AG04449 (cell line): ENCODE measurements at regions of chrX and their contacts with region 1.

Region 1: DNA sequence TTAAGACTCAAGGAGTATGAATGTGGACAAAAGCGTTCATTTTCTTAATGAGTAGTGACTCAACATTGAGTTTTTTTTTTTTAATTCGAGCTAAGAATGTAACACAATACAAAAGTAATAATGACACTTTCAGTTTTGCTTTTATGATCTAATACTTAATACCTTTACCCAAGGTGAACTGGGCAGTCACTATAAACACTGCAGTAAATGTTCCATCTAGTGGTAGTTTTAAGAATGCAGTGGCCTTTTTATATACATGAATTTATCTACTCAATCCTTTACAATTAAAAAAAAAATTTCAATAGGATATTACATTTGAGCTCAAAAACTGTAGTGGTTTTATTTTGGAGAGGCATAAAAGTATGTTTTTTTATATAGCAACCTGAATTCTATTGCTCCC is 33.9 kb downstream of the PDK3 start:
- DNase-seq: no peak
- H3K4me3 ChIP-seq: no peak overlapping the region
- CTCF ChIP-seq: no peak

Region 2: DNA sequence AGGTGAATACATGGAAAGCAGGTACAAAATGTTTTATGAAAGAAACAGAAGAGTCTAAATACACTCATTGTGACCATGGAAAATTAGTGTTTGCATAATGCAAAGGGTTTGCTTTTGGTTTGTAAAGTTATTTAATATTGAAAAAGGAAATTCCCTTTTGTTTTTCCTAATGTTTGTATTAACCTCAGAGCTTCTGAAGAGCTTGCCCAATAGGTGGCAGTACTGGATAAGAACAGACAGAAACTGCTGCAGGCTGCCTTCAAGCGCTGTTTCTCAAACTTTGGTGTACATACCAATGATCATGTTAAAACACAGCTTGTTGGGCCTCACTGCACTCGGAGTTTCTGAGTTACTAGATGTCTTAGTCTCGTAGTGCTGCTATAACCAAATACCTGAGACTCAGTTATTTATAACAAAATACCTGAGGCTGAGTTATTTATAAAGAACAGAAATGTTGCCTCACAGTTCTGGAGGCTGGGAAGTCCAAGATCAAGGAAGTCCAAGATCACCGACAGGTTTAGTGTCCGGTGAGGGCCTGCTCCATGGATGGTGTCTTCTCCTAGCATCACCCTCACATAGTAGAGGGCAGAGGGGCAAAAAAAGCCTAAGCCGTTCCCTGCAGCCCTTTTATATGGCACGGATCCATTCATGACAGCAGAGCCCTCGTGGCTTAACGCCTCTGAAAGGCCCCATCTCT is 239.3 kb before region 1 on chrX:
- CTCF ChIA-PET with region 1: interaction called, 40 read pairs
- POLR2A ChIA-PET with region 1: no interaction called
- DNase-seq: no peak
- H3K4me3 ChIP-seq: no peak overlapping the region
- CTCF ChIP-seq: peak; percentile 45

Region 3: GRCh38 chrX:24395775-24396174 is 103.2 kb before region 1 on chrX:
- CTCF ChIA-PET with region 1: interaction called, 77 read pairs
- POLR2A ChIA-PET with region 1: no interaction called
- DNase-seq: peak; percentile 26
- H3K4me3 ChIP-seq: no peak overlapping the region
- CTCF ChIP-seq: peak; percentile 55

Region 4: DNA sequence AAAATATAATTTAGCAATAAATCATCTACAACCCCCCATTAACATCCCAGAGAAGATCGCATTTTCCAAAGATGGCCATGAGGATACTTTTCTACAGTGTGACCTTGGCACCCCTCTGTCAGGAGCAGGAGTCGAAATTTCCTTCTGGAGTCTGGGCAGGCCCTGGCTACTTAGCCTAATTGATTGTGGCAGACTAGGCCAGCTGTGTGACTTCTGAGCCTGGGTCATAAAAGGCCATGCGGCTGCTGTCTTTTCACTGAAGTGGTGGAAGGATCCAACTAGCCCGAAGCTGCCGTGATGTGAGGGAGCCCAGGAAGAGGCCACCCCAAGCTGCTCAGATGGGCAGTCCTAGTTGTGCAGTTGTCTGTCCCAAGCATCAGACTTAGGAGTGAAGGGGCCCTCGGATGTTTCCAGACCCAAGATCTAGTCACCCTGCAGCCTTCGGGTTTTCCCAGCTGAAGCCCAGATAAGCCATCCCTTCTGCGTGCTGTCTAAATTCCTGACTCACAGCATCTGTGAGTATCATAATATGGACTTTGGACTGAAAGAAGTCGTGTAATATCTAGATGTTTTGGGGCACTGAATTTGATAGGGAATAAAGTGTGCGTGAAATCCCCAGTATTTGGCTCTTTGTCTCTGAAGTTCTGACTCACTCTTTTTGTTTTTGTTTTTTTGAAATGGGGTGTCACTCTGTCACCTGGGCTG is 12.8 kb before region 1 on chrX:
- CTCF ChIA-PET with region 1: interaction called, 15 read pairs
- POLR2A ChIA-PET with region 1: no interaction called
- DNase-seq: no peak
- H3K4me3 ChIP-seq: no peak overlapping the region
- CTCF ChIP-seq: no peak

Region 5: DNA sequence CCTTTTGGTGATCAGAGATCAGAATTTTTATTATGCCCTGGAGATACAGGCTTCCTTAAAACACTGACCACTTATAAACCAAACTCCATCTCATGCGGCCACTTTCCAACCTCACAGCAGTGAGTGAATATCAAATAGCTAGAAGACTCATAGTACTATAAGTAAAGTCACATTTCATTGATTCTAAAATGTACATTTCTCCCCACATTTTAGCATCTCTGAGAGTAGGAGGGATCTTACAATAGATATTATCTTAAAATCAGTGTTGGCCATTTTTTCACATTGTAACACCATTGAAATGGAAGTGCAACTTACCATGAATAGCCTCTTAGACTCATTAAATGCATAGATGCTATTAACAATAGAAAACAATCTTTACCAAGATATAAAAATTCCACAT is 130.7 kb after region 1 on chrX:
- CTCF ChIA-PET with region 1: no interaction called
- POLR2A ChIA-PET with region 1: no interaction called
- DNase-seq: no peak
- H3K4me3 ChIP-seq: no peak overlapping the region
- CTCF ChIP-seq: no peak